Mammary epithelial cell (primary cell): ENCODE measurements at regions of chr19 and their contacts with region 1.

Region 1: GRCh38 chr19:39254531-39255345 is 6.1 kb upstream of the IFNL4 start:
- DNase-seq: no peak
- H3K4me3 ChIP-seq: no peak overlapping the region
- H3K27ac ChIP-seq: no peak overlapping the region
- H3K4me1 ChIP-seq: no peaks in the 10 kb centered on the region
- H3K27me3 ChIP-seq: no peaks in the 10 kb centered on the region
- CTCF ChIP-seq: no peak

Region 2: DNA sequence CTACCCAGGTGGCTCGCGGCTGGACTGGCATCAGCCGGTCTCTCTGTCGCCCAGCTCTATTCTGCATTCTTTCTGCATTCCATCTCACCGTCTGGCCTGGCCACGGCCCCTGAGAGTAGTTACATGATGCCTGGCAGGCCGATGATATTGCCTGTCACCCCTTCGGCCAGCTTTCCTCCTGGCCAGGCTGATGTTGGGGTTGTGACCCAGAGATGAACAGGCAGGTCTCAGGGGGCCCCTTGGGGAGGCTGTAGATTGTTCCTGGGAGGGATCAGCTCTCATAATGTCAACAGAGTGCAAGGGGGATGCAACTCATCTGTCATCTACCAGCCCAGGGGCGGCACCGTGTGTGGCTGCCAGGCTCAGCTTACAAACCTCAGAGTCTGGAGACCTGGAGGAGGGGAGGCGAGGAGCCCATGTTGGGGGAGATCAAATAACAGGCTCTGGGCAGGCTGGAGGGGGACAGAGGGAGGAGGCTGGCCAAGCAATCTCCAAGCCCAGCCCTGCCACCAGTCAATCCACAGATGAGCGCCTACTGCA is 265.6 kb before region 1 on chr19:
- CTCF ChIA-PET with region 1: no interaction called
- dilution Hi-C with region 1: loop called (anchors 5 kb)
- in situ Hi-C with region 1: no loop called
- intact Hi-C with region 1: no loop called
- DNase-seq: no peak
- H3K4me3 ChIP-seq: no peak overlapping the region
- H3K27ac ChIP-seq: no peak overlapping the region
- H3K4me1 ChIP-seq: peaks cover 25% of the 10 kb centered on the region
- H3K27me3 ChIP-seq: no peaks in the 10 kb centered on the region
- CTCF ChIP-seq: no peak

Region 3: DNA sequence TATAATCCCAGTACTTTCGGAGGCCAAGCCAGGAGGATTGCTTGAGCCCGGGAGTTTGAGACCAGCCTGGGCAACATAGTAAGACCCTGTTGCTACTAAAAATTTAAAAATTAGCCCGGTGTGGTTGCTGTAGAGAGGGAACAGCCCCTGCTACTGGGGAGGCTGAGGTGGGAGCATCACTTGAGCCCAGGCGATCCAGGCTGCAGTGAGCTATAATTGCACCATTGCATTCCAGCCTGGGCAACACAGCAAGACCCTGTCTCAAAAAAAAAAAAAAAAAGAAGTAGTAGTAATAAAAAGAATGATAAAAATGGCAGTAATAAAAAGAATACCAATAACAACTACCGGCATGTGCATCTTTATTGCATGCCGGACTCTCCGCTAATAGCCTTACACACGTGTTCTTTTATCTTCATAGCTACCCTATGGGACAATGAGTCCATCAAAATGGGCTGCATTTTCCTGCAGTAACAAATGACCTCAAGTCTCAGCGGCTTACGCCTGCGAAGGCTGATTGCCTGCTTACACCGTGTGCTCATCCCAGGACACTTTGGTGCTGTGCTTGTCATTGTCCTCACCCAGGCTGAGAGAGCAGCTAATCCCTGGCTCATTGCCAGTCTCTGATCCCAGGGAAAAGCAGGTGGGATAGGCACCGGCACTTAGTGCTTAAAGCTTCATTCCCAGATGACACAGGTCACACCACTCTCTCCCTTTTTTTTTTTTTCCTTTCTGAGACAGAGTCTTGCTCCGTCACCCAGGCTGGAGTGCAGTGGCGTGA is 36.3 kb before region 1 on chr19:
- CTCF ChIA-PET with region 1: no interaction called
- dilution Hi-C with region 1: loop called (anchors 5 kb)
- in situ Hi-C with region 1: no loop called
- intact Hi-C with region 1: no loop called
- DNase-seq: no peak
- H3K4me3 ChIP-seq: no peak overlapping the region
- H3K27ac ChIP-seq: no peak overlapping the region
- H3K4me1 ChIP-seq: no peaks in the 10 kb centered on the region
- H3K27me3 ChIP-seq: no peaks in the 10 kb centered on the region
- CTCF ChIP-seq: no peak

Region 4: DNA sequence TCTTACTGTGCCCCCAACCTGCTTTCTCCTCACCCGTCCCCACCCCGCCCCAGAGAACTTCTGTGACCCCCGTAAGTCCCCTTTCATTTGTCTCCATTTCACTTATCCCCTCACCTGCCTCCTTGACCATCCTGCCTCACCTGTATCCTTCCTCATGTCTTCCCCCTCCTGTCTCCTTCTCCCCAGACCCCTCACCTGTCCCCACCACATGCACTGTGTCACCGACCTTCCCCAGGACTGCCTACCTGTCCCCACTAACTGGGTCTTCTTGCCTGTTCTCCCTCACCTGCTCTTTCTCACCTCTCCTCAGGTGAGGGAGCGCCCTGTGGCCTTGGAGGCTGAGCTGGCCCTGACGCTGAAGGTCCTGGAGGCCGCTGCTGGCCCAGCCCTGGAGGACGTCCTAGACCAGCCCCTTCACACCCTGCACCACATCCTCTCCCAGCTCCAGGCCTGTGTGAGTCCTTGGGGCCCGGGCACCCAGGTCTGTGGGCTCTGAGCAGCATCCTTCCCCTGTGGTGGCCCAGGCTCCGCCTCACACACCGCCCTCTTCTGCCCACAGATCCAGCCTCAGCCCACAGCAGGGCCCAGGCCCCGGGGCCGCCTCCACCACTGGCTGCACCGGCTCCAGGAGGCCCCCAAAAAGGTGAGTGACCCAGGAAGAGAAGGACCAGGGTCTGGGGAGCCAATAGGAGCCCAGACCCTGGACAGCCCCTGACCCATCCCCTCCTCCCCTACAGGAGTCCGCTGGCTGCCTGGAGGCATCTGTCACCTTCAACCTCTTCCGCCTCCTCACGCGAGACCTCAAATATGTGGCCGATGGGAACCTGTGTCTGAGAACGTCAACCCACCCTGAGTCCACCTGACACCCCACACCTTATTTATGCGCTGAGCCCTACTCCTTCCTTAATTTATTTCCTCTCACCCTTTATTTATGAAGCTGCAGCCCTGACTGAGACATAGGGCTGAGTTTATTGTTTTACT is 43.2 kb after region 1 on chr19:
- CTCF ChIA-PET with region 1: no interaction called
- dilution Hi-C with region 1: loop called (anchors 5 kb)
- in situ Hi-C with region 1: no loop called
- intact Hi-C with region 1: no loop called
- DNase-seq: no peak
- H3K4me3 ChIP-seq: no peak overlapping the region
- H3K27ac ChIP-seq: no peak overlapping the region
- H3K4me1 ChIP-seq: no peaks in the 10 kb centered on the region
- H3K27me3 ChIP-seq: no peaks in the 10 kb centered on the region
- CTCF ChIP-seq: no peak

Region 5: GRCh38 chr19:39351537-39352064 is 96.9 kb after region 1 on chr19:
- CTCF ChIA-PET with region 1: no interaction called
- dilution Hi-C with region 1: loop called (anchors 5 kb)
- in situ Hi-C with region 1: no loop called
- intact Hi-C with region 1: no loop called
- DNase-seq: no peak
- H3K4me3 ChIP-seq: no peak overlapping the region
- H3K27ac ChIP-seq: no peak overlapping the region
- H3K4me1 ChIP-seq: no peaks in the 10 kb centered on the region
- H3K27me3 ChIP-seq: no peaks in the 10 kb centered on the region
- CTCF ChIP-seq: no peak